HEK293 (cell line): ENCODE measurements at regions of chr10 and their contacts with region 1.

Region 1: GRCh38 chr10:95374597-95375209 is 83.9 kb upstream of the PDLIM1 start:
- H3K4me3 ChIP-seq: no peak overlapping the region
- H3K27ac ChIP-seq: no peak overlapping the region
- H3K4me1 ChIP-seq: no peaks in the 10 kb centered on the region
- CTCF ChIP-seq: peak; percentile 94

Region 2: GRCh38 chr10:95363303-95363912 is 11.3 kb before region 1 on chr10:
- CTCF ChIA-PET with region 1: interaction called, 98 read pairs
- POLR2A ChIA-PET with region 1: interaction called, 3 read pairs
- H3K4me3 ChIP-seq: no peak overlapping the region
- H3K27ac ChIP-seq: no peak overlapping the region
- H3K4me1 ChIP-seq: no peaks in the 10 kb centered on the region
- CTCF ChIP-seq: peak; percentile 58; the same call in 1 of the 2 replicates

Region 3: GRCh38 chr10:95414844-95415485 is 40.3 kb after region 1 on chr10:
- CTCF ChIA-PET with region 1: interaction called, 13 read pairs
- POLR2A ChIA-PET with region 1: no interaction called
- H3K4me3 ChIP-seq: no peak overlapping the region
- H3K27ac ChIP-seq: no peak overlapping the region
- H3K4me1 ChIP-seq: no peaks in the 10 kb centered on the region
- CTCF ChIP-seq: no peak

Region 4: GRCh38 chr10:95445837-95446486 is 71.3 kb after region 1 on chr10:
- CTCF ChIA-PET with region 1: interaction called, 19 read pairs
- POLR2A ChIA-PET with region 1: no interaction called
- H3K4me3 ChIP-seq: no peak overlapping the region
- H3K27ac ChIP-seq: no peak overlapping the region
- H3K4me1 ChIP-seq: peaks cover 3% of the 10 kb centered on the region; the same call in 1 of the 2 replicates
- CTCF ChIP-seq: peak; percentile 70

Region 5: DNA sequence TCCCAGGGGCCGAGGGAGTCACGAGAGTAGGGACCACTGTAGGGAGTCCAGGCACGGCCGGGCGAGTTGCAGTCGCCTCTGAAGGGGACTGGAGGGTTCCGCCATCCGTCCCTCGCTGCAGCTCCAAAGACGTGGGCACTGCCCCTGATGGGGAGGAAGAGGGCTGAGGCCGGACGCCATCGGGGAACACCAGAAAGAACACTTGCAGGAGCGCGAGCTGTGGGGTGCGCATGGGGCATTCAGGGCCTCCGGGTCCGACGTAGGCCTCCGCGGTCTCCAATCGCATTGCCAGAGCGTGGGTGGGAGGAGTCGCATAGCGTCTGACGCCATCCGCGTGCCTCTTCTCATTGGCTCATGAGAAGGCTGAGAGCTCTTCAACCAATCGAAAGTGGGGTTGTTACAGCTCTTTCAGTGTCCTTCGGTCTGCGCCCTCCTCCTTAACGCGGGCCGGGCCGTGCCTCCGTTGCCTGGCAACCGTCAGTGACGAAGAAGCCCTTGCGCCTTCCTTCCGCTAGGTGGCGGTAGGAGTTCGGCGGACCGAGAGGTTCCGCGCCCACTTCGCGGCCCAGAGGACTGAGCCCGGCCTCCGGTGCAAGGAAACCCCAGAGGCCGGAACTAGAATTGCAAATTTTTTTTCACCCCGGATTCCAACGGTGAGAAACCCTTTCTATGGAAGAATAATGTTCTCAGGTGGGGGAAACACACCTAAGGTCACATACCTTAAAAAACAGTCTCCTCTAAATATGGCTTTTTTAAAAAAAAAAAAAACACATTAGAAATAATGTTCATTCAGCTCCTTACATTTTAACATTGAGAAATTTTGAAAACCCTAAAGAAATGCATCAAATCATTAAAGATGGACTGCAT is 319.2 kb after region 1 on chr10 and contains the start of gene TCTN3:
- CTCF ChIA-PET with region 1: interaction called, 16 read pairs
- POLR2A ChIA-PET with region 1: no interaction called
- H3K4me3 ChIP-seq: peak within 1 kb of the TSS; percentile 73
- H3K27ac ChIP-seq: peak within 1 kb of the TSS; percentile 50; the same call in 1 of the 2 replicates
- H3K4me1 ChIP-seq: peaks cover 5% of the 10 kb centered on the region; the same call in 1 of the 2 replicates
- CTCF ChIP-seq: peak; percentile 99